Calu3 (cell line): ENCODE measurements at regions of chr17 and their contacts with region 1.

Region 1: GRCh38 chr17:46178550-46179214 is 14.5 kb downstream of the KANSL1 start:
- DNase-seq: no peak
- H3K4me3 Mint-ChIP-seq: no peak overlapping the region
- H3K27ac Mint-ChIP-seq: peak overlapping the region; percentile 4
- H3K4me1 Mint-ChIP-seq: peaks cover 69% of the 10 kb centered on the region
- H3K27me3 Mint-ChIP-seq: no peaks in the 10 kb centered on the region
- CTCF ChIP-seq: no peak

Region 2: GRCh38 chr17:46121841-46122485 is 56.7 kb before region 1 on chr17:
- CTCF ChIA-PET with region 1: no interaction called
- intact Hi-C with region 1: no loop called
- DNase-seq: no peak
- H3K4me3 Mint-ChIP-seq: no peak overlapping the region
- H3K27ac Mint-ChIP-seq: no peak overlapping the region
- H3K4me1 Mint-ChIP-seq: peaks cover 33% of the 10 kb centered on the region
- H3K27me3 Mint-ChIP-seq: no peaks in the 10 kb centered on the region
- CTCF ChIP-seq: no peak

Region 3: DNA sequence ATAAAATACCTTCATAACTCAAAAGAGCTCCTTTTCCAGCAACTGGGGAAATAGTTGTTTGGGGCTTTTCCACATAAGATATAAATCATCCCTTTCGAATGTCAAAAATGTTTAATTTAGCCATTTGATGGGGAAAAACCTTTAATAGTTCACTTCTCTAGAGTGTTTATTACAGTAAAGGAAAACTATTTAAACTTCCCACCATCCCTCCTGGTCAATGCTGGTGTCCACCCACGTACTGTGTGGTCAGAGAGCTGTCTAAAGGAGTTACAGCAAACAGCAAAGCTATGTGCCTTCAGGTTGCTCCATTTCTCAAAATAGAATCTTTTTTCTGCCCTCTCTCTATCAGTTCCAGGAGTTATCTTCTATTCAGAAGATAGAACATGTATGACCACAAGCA is 19.0 kb before region 1 on chr17:
- CTCF ChIA-PET with region 1: interaction called, 7 read pairs
- intact Hi-C with region 1: loop called (anchors 2 kb)
- DNase-seq: no peak
- H3K4me3 Mint-ChIP-seq: no peak overlapping the region
- H3K27ac Mint-ChIP-seq: peak overlapping the region; percentile 25
- H3K4me1 Mint-ChIP-seq: peaks cover 62% of the 10 kb centered on the region
- H3K27me3 Mint-ChIP-seq: no peaks in the 10 kb centered on the region
- CTCF ChIP-seq: no peak

Region 4: DNA sequence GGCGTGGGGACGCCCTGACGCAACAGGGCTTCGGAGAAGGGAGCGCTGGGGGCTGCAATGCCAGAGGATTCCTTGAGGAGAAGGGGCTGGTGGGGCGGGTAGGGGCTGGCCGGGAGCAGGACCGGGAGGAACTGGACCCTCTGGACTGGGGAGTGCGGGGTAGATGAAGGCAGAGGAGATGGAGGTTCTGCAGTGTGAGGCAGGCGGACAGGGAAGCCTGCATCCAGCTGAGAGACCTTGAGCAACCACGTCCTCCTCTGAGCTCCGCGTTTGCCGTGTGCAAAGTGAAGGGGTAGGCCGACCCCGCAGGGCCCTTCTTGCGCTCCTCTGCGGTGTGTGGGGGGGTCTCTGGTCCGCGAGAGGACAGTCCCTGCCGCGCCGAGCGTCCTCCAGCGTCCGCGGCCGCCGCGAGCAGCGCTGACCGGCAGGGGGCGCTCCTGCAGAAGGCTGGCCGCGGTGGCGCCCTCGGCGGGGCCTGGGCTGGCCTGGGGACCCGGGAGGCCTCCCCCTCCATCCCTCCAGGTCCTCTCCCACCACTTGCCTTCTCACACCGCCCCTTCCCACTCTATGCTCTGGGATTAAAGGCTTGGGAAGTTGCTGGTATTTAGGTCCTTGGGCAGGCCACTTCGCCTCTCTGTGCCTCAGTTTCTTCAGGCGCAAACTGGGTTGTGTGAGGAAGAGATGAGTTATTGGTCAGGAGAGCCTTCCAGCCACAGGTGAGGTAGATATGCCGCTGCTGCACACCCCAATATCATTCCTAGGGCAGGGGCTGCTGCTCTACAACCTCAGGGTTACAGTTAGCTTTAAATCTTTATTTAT is 663.1 kb after region 1 on chr17:
- CTCF ChIA-PET with region 1: interaction called, 12 read pairs
- intact Hi-C with region 1: no loop called
- DNase-seq: peak; percentile 58
- H3K4me3 Mint-ChIP-seq: peak overlapping the region; percentile 38
- H3K27ac Mint-ChIP-seq: no peak overlapping the region
- H3K4me1 Mint-ChIP-seq: no peaks in the 10 kb centered on the region
- H3K27me3 Mint-ChIP-seq: peaks cover 91% of the 10 kb centered on the region
- CTCF ChIP-seq: peak; percentile 88